Activated CD4-positive, alpha-beta memory T cell treated with anti-CD3 and anti-CD28 coated beads for 36 hours (primary cell): ENCODE measurements at regions of chr2 and their contacts with region 1.

Region 1: DNA sequence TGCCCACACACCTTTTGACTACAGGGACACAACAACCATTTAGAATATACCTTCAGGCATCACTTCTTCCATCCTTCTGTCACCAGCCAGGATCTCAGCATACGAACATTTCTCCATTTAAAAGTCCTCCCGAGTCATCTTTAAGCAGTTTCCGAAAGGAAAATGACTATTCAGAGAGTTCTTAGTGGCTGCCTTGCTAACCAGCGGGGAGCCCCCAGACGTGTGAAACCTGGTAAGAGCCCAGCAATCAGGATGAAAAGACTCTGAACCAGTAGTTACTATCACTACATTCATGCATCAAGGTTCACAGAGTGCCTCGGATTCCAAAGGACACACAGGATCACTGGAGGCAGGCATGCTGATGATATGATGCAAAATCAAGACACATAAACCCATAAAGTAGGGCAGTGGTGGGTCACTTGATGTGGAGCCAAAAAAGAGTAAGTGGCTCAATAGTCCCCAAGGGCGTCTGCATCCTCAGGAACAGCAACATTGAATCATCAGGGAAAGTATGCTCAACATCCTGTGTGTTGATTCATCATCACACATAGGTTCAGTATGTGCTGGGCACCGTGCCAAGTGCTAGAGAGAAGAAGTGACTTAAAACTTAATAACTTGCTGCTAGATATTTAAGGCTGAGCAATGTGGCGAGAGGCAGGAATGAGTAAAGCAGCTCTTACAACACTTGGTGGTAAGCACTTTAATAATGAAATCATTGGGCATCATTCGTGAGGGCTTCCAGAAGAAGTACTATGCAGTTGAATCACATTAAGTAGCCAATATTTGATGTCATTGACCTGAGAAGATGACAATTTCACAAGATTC is 4.4 kb downstream of the CCL20 start:
- DNase-seq: peak; percentile 94
- H3K4me3 Mint-ChIP-seq: peak overlapping the region; percentile 42
- H3K27ac Mint-ChIP-seq: peak overlapping the region; percentile 79
- H3K4me1 Mint-ChIP-seq: peaks cover 39% of the 10 kb centered on the region
- H3K27me3 Mint-ChIP-seq: peaks cover 5% of the 10 kb centered on the region

Region 2: DNA sequence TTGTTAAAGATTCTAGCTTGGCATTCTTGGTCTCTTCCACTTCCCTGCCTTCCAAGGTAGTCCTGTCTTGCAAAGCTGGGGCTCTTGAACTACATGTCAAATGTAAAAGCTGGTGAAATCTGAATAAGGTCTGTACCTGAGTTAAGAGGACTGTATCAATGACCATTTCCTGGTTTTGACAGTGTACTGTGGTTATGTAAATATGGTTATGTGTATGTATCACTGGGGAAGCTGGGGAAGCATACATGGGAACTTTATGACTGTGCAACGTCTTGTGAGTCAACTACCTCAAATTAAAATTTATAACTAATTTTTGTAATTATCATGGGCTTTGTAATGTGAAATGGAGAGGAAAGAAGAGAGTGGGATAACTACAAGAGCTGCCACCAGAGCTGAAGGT is 735.8 kb before region 1 on chr2:
- CTCF ChIA-PET with region 1: no interaction called
- POLR2A ChIA-PET with region 1: no interaction called
- intact Hi-C with region 1: no loop called
- DNase-seq: no peak
- H3K4me3 Mint-ChIP-seq: no peak overlapping the region
- H3K27ac Mint-ChIP-seq: no peak overlapping the region
- H3K4me1 Mint-ChIP-seq: no peaks in the 10 kb centered on the region
- H3K27me3 Mint-ChIP-seq: peaks cover 13% of the 10 kb centered on the region

Region 3: DNA sequence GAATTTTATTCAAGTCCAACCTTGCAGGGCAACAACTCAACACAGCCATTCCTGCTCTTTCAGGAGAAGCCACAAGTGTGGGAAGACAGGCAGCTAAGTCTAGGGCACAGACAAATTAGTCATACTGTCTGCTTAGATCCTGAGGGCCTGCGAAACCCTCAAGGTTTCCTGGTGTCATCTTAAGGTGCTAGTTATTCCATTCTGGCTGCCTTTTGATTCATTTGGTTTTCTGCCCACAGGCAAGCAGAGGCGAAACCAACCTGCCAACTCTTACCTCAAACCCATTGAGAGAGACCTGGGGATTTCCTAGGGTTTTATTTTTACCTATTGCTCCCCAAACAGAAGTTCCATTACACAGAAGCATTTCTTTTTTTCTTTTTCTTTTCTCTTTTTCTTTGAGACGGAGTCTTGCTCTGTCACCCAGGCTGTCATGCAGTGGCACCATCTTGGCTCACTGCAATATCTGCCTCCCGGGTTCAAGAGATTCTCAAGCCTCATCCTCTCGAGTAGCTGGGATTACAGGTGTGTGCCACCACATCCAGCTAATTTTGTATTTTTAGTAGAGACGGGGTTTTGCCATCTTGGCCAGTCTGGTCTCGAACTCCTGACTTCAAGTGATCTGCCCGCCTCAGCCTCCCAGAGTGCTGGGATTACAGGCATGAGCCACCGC is 406.6 kb before region 1 on chr2:
- CTCF ChIA-PET with region 1: no interaction called
- POLR2A ChIA-PET with region 1: interaction called, 3 read pairs
- intact Hi-C with region 1: loop called (anchors 1 kb)
- DNase-seq: peak; percentile 81
- H3K4me3 Mint-ChIP-seq: peak overlapping the region; percentile 11
- H3K27ac Mint-ChIP-seq: peak overlapping the region; percentile 89
- H3K4me1 Mint-ChIP-seq: peaks cover 57% of the 10 kb centered on the region
- H3K27me3 Mint-ChIP-seq: no peaks in the 10 kb centered on the region

Region 4: DNA sequence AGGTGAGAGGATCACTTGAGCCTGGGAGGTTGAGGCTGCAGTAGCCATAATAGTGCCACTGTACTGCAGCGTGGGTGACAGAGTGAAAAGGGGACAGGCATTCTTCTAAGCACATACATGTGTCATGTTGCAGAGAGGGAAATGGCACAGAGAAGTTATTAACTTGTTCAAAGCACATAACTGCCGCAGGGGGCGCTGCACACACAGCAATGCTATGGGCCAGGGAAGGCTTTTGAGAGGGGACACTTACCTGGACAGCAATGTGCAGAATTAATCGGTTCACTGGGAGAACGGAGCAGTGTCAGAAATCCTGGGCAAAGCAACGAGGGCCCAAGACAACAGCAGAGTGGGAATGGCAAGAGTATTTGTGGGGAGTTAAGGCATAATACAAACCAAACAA is 70.0 kb before region 1 on chr2:
- CTCF ChIA-PET with region 1: no interaction called
- POLR2A ChIA-PET with region 1: no interaction called
- intact Hi-C with region 1: no loop called
- DNase-seq: peak; percentile 25
- H3K4me3 Mint-ChIP-seq: no peak overlapping the region
- H3K27ac Mint-ChIP-seq: no peak overlapping the region
- H3K4me1 Mint-ChIP-seq: no peaks in the 10 kb centered on the region
- H3K27me3 Mint-ChIP-seq: no peaks in the 10 kb centered on the region

Region 5: GRCh38 chr2:227783404-227784138 is 34.5 kb before region 1 on chr2:
- CTCF ChIA-PET with region 1: interaction called, 3 read pairs
- POLR2A ChIA-PET with region 1: interaction called, 8 read pairs
- intact Hi-C with region 1: loop called (anchors 1 kb)
- DNase-seq: peak; percentile 18
- H3K4me3 Mint-ChIP-seq: peak overlapping the region; percentile 66
- H3K27ac Mint-ChIP-seq: peak overlapping the region; percentile 77
- H3K4me1 Mint-ChIP-seq: peaks cover 19% of the 10 kb centered on the region
- H3K27me3 Mint-ChIP-seq: peaks cover 5% of the 10 kb centered on the region

Region 6: DNA sequence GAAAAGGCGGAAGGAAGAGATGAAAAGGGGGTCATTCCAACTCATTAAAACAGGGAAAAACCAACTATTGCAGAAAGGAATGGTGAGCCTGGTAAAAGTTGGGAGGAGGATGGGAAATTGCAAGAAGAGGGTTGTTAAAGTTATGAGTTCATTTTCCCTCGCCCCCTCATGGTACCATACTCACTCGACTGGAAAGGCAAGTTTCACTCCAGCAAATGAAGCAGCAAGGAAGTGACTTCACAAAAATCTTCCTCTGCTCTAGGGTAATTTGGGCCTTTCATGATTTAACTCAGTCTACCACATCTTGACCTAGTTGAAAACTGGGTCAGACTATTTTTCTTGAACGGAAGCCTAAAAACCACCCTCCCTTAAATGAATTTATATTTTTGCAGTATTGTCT is 30.5 kb after region 1 on chr2:
- CTCF ChIA-PET with region 1: no interaction called
- POLR2A ChIA-PET with region 1: interaction called, 9 read pairs
- intact Hi-C with region 1: loop called (anchors 1 kb)
- DNase-seq: peak; percentile 31
- H3K4me3 Mint-ChIP-seq: peak overlapping the region; percentile 55
- H3K27ac Mint-ChIP-seq: peak overlapping the region; percentile 84
- H3K4me1 Mint-ChIP-seq: peaks cover 28% of the 10 kb centered on the region
- H3K27me3 Mint-ChIP-seq: no peaks in the 10 kb centered on the region